ENCODE measurements at regions of chr14 and their contacts with region 1.

Region 1: DNA sequence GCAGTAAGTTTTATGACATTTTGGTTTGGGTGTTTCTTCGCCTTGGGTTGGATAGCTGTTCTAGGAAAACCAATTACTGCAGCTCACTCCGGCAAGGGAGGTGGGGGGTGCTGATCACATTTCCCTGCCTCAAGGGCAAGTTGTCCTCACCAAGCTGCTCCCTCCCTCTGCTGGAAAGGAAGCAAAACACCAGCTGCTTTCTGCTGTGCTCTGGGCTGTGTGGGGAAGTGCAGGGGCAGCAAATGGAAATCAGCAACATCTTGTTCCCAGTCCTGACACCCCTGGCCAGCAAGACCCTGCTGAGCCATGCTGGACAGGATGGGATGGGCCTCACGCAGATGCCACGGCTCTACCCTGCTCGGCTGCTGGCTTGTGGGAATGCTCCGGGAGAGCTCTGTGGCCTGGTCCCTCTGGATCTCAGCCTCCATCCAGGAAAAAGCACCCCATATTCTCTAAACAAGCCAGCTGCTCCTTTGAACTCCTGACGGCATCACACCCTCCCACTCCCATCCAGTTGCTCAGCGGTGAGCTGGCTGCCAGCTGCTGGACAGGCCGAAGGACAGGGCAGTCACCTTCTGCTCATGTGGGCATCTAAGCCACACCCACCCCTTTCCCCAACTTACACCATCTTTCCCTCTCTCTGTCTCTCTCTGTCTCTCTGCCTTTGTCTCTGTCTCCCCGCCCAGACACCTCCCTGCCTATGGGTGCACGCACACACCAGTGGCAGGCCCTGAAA is 52.4 kb upstream of the EIF5 start:
- DNase-seq: peak; percentile 64 to 77
- H3K4me3 ChIP-seq: no peak overlapping the region
- H3K27ac ChIP-seq: no peak overlapping the region
- H3K4me1 ChIP-seq: peaks cover 49% of the 10 kb centered on the region
- H3K27me3 ChIP-seq: no peaks in the 10 kb centered on the region
- CTCF ChIP-seq: peak; percentile 82

Region 2: GRCh38 chr14:103097994-103098957 is 183.4 kb before region 1 on chr14:
- CTCF ChIA-PET with region 1: interaction called, 18 read pairs
- POLR2A ChIA-PET with region 1: no interaction called
- intact Hi-C with region 1: no loop called
- DNase-seq: no peak
- H3K4me3 ChIP-seq: no peak overlapping the region
- H3K27ac ChIP-seq: no peak overlapping the region
- H3K4me1 ChIP-seq: peaks cover 41% of the 10 kb centered on the region
- H3K27me3 ChIP-seq: no peaks in the 10 kb centered on the region
- CTCF ChIP-seq: no peak

Region 3: DNA sequence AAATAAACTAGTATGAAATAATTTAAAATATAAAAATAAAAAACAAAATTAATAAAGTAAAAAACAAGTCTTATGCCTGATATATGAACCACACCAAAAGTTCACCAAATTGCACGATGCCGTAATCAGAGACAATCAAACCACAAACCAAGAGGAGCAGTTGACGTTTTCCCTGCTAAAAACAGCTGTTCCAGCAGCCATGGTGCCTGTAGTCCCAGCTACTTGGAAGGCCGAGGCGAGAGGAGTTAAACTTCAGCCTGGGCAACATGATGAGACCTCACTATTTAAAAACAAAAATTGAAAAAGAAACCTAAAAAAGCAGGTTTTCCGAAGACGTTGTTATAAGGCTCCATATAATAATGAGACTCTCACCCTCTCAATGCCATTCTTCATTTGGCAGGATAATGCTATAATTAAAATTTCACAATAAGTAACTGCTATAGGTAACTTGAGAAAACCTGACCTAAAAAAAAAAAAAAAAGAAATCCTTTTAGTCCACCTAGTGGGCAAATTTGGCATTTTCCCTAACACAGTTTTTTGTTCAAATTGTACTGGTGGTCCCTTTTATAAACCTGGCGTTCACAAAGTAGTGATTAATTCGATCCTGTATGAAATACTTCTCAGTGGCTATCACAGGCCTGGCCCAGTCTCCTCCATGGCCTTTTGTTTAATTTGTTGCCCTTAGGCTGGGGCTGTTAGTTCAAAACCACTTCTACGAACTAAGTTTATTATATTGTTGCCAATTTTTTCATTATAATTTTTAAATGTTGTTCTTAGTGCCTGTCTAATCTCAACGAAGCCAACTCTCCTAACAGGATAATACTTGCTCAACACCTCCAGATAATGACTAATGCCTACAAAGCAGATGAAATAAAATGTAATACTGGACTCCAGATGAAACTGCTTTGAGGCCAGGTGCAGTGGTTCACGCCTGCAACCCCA is 96.3 kb before region 1 on chr14:
- CTCF ChIA-PET with region 1: interaction called, 3 read pairs
- POLR2A ChIA-PET with region 1: interaction called, 3 read pairs
- intact Hi-C with region 1: loop called (anchors 1 kb)
- DNase-seq: peak; percentile 49 to 96
- H3K4me3 ChIP-seq: peak overlapping the region; percentile 14; the same call in 1 of the 2 replicates
- H3K27ac ChIP-seq: peak overlapping the region; percentile 92
- H3K4me1 ChIP-seq: peaks cover 37% of the 10 kb centered on the region
- H3K27me3 ChIP-seq: no peaks in the 10 kb centered on the region
- CTCF ChIP-seq: peak; percentile 100

Region 4: DNA sequence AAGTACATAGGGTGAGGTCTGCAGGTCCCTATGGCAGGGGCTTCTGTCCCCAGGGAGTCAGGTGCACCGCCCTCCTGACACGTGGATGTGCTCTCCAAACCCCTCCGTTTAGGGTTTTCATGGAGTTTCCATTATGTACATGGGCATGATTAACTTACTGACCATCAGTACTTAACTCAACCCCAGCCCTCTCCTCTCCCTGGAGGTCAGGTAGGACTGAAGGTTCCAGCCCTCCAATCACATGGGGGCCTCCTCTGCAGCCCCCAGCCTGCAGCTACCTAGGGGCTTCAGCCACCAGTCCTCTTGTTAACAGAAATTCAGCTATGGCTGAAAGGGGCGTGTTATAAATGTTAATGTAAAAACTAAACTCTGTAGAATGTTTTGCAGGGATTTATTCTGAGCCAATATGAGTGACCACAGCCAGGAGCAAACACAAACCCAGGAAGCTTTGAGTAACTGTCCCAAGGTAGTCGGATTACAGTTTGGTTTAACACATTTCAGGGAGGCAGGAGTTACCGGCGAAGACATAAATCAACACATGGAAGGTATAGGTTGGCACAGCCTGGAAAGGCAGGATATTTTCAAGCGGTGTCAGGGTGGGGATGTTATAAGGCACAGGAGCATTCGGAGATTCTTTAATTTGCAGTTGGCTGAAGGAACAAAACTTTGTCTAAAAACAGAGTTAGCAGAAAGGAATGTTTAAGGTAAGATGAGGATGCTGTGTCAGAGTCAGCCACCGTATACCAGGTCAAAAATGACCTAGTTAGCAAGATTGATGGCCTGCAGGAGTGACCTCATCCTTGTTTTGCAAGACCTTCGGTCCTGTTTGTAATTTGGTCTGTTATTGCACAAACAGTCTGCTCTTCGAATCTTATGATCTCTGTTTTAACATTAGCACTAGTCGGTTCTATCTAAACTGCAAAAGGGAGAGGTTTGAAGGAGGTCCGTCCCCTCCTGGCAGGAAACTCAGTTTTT is 83.2 kb before region 1 on chr14:
- CTCF ChIA-PET with region 1: interaction called, 12 read pairs
- POLR2A ChIA-PET with region 1: no interaction called
- intact Hi-C with region 1: loop called (anchors 2 kb)
- DNase-seq: peak; percentile 58 to 99
- H3K4me3 ChIP-seq: peak overlapping the region; percentile 9; the same call in 1 of the 2 replicates
- H3K27ac ChIP-seq: peak overlapping the region; percentile 73
- H3K4me1 ChIP-seq: peaks cover 54% of the 10 kb centered on the region
- H3K27me3 ChIP-seq: no peaks in the 10 kb centered on the region
- CTCF ChIP-seq: no peak

Region 5: DNA sequence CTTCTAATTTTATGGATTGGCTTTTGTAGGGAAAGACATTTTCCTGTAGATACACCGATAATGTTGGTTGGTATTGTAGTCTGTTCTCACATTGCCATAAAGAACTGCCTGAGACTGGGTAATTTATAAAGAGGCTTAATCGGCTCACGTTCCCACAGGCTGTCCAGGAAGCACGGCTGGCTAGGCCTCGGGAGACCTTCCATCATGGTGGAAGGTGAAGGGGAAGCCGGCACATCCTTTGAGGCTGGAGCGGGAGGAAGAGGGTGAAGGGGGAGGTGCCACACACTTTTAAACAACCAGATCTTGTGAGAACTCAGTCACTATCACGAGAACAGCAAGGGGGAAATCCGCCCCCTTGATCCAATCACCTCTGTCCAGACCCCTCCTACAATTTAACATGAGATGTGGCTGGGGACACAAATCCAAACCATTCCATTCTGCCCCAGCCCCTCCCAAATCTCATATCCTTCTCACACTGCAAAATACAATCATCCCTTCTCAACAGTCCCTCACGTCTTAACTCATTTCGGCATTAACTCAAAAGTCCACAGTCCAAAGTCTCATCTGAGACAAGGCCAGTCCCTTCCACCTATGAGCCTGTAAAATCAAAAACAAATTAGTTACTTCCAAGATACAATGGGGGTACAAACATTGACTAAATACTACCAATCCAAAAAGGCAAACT is 14.3 kb before region 1 on chr14:
- CTCF ChIA-PET with region 1: no interaction called
- POLR2A ChIA-PET with region 1: no interaction called
- intact Hi-C with region 1: no loop called
- DNase-seq: no peak
- H3K4me3 ChIP-seq: no peak overlapping the region
- H3K27ac ChIP-seq: no peak overlapping the region
- H3K4me1 ChIP-seq: peaks cover 8% of the 10 kb centered on the region; the same call in 1 of the 2 replicates
- H3K27me3 ChIP-seq: no peaks in the 10 kb centered on the region
- CTCF ChIP-seq: no peak

Measured in PC-9 (cell line).